Naive thymus-derived CD8-positive, alpha-beta T cell (primary cell): ENCODE measurements at regions of chr14 and their contacts with region 1.

Region 1: GRCh38 chr14:99254328-99255009 is 17.5 kb downstream of the BCL11B start:
- DNase-seq: peak in 1 of 10 donors; percentile 51
- ATAC-seq: no peak
- H3K4me3 Mint-ChIP-seq: peak overlapping the region; percentile 74 to 100 (median 90)
- H3K27ac Mint-ChIP-seq: peak overlapping the region; percentile 99 to 100 (median 100)
- H3K4me1 Mint-ChIP-seq: peaks cover 43 to 96% (median 90%) of the 10 kb centered on the region in 4 donors
- H3K27me3 Mint-ChIP-seq: no peaks in the 10 kb centered on the region

Region 2: GRCh38 chr14:98858158-98858557 is 396.3 kb before region 1 on chr14:
- POLR2A ChIA-PET with region 1: interaction called, 10 read pairs
- DNase-seq: no peak
- ATAC-seq: no peak
- H3K4me3 Mint-ChIP-seq: no peak overlapping the region
- H3K27ac Mint-ChIP-seq: peak overlapping the region in 1 of 10 donors; percentile 76
- H3K4me1 Mint-ChIP-seq: peaks cover 0 to 5% (median 2%) of the 10 kb centered on the region in 4 donors
- H3K27me3 Mint-ChIP-seq: peaks cover 0 to 4% (median 0%) of the 10 kb centered on the region in 5 donors